ENCODE measurements at regions of chr17 and their contacts with region 1.

Region 1: GRCh38 chr17:43694077-43694870 is 32.6 kb upstream of the MEOX1 start:
- DNase-seq: peak; percentile 88
- H3K4me3 ChIP-seq: no peak overlapping the region
- H3K27ac ChIP-seq: no peak overlapping the region
- H3K4me1 ChIP-seq: peaks cover 0 to 14% (median 11%) of the 10 kb centered on the region in 4 donors
- H3K27me3 ChIP-seq: no peaks in the 10 kb centered on the region
- CTCF ChIP-seq: peak; percentile 86 to 94 (median 92)
- EP300 ChIP-seq: no peak
- POLR2A ChIP-seq: no peak

Region 2: DNA sequence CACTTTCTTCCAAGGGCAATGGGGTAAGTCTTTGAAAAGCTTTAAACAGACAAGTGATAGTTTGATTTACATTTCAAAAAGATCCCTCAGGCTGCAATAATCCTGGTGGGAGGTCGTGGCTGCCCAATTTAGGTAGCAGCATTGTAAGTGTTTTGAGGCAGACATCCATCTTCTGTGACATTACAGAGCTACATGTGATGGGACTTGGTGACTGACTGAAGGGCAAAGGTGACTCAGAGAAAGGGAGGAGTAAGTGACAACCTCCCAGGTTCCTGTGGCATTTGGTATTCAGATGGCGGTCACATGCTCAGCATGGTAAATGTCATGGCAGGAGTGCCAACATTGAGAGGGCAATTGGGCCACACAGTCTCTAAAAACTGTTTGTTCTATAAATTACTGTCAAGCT is 1332.5 kb before region 1 on chr17:
- intact Hi-C with region 1: no loop called
- DNase-seq: no peak
- H3K4me3 ChIP-seq: no peak overlapping the region
- H3K27ac ChIP-seq: peak overlapping the region in 2 of 4 donors; percentile 9 to 17
- H3K4me1 ChIP-seq: peaks cover 0 to 82% (median 72%) of the 10 kb centered on the region in 4 donors
- H3K27me3 ChIP-seq: no peaks in the 10 kb centered on the region
- CTCF ChIP-seq: no peak
- EP300 ChIP-seq: no peak
- POLR2A ChIP-seq: no peak

Region 3: DNA sequence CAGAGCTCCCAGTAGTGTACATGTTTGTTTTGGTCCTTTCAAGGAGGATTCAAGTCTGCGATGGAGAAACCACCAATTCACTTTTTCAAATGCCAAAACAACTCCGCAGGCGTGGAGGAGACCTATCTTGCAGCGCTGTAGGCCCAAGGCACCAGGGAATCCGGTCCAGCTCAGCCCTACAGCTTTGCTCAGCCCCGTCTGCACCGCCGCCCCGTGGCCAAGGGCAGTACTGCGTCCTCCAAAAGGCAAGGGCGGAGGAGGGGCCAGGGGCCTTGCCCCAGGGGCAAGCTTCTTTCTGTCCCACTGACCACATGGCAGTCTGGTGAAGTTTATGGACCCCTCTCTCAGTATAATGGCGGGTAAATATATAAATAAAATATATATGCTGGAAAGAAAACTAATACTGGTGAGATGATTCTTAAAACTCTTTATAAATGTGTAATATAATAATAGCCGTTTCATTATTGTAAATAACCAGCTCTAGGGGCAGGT is 152.0 kb after region 1 on chr17:
- intact Hi-C with region 1: loop called (anchors 2 kb)
- DNase-seq: peak; percentile 94
- H3K4me3 ChIP-seq: no peak overlapping the region
- H3K27ac ChIP-seq: peak overlapping the region in 3 of 4 donors; percentile 5 to 40 (median 32)
- H3K4me1 ChIP-seq: peaks cover 0 to 16% (median 9%) of the 10 kb centered on the region in 4 donors
- H3K27me3 ChIP-seq: no peaks in the 10 kb centered on the region
- CTCF ChIP-seq: peak; percentile 95 to 98 (median 96)
- EP300 ChIP-seq: no peak
- POLR2A ChIP-seq: no peak

Region 4: DNA sequence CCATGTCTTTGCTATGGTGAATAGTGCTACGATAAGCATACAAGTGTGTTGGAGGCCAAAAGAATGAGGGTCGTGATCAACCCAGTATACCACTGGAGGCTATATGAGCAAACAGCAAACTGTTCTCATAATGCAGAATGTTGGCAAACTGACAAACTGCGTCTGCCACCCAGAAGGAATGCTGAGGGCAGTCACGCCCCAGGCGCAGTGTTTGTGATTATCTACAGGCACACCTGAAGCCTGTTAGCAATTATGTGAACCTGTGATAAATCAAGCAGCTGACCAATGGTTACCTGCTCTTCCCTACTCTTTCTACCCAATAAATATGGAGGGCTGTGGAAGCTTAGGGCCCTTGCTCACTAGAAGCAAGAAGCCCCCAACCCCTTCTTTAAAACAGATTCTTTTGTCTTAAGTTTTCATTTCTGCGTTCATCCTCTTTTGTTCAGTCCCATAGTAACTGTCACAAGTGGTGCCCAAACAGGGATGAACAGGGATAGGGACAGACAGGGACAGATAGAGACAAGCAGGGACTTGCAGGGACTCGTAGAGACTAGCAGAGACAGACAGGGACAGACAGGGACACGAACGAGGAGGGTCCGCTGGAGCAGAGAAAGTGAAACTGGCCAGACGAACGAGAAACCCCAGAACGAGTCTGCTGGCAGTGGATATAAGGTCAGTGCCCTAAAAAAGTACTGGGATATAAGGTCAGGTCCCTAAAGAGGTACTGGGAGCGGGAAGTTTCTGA is 177.8 kb after region 1 on chr17:
- intact Hi-C with region 1: no loop called
- DNase-seq: no peak
- H3K4me3 ChIP-seq: no peak overlapping the region
- H3K27ac ChIP-seq: no peak overlapping the region
- H3K4me1 ChIP-seq: peaks cover 0 to 5% (median 0%) of the 10 kb centered on the region in 4 donors
- H3K27me3 ChIP-seq: no peaks in the 10 kb centered on the region
- CTCF ChIP-seq: no peak
- EP300 ChIP-seq: no peak
- POLR2A ChIP-seq: no peak